ENCODE measurements at regions of chr5 and their contacts with region 1.

Region 1: GRCh38 chr5:168227001-168227400 is 64.4 kb upstream of the WWC1 start:
- DNase-seq: no peak
- H3K4me3 ChIP-seq: no peak overlapping the region
- H3K4me3 Mint-ChIP-seq: no peak overlapping the region
- H3K27ac Mint-ChIP-seq: no peak overlapping the region
- H3K4me1 ChIP-seq: no peaks in the 10 kb centered on the region; the same call in 1 of the 2 replicates
- H3K4me1 Mint-ChIP-seq: no peaks in the 10 kb centered on the region
- H3K27me3 ChIP-seq: no peaks in the 10 kb centered on the region
- H3K27me3 Mint-ChIP-seq: peaks cover 8% of the 10 kb centered on the region
- CTCF ChIP-seq: no peak

Region 2: GRCh38 chr5:167458406-167458805 is 768.6 kb before region 1 on chr5:
- CTCF ChIA-PET with region 1: interaction called, 10 read pairs
- POLR2A ChIA-PET with region 1: no interaction called
- intact Hi-C with region 1: no loop called
- DNase-seq: no peak
- H3K4me3 ChIP-seq: no peak overlapping the region
- H3K4me3 Mint-ChIP-seq: no peak overlapping the region
- H3K27ac Mint-ChIP-seq: no peak overlapping the region
- H3K4me1 ChIP-seq: no peaks in the 10 kb centered on the region
- H3K4me1 Mint-ChIP-seq: no peaks in the 10 kb centered on the region
- H3K27me3 ChIP-seq: no peaks in the 10 kb centered on the region
- H3K27me3 Mint-ChIP-seq: peaks cover 17% of the 10 kb centered on the region
- CTCF ChIP-seq: no peak

Region 3: GRCh38 chr5:168066536-168067208 is 160.3 kb before region 1 on chr5:
- CTCF ChIA-PET with region 1: no interaction called
- POLR2A ChIA-PET with region 1: no interaction called
- intact Hi-C with region 1: no loop called
- DNase-seq: no peak
- H3K4me3 ChIP-seq: no peak overlapping the region
- H3K4me3 Mint-ChIP-seq: no peak overlapping the region
- H3K27ac Mint-ChIP-seq: no peak overlapping the region
- H3K4me1 ChIP-seq: no peaks in the 10 kb centered on the region
- H3K4me1 Mint-ChIP-seq: no peaks in the 10 kb centered on the region
- H3K27me3 ChIP-seq: no peaks in the 10 kb centered on the region; the same call in 1 of the 2 replicates
- H3K27me3 Mint-ChIP-seq: peaks cover 19% of the 10 kb centered on the region
- CTCF ChIP-seq: no peak

Region 4: DNA sequence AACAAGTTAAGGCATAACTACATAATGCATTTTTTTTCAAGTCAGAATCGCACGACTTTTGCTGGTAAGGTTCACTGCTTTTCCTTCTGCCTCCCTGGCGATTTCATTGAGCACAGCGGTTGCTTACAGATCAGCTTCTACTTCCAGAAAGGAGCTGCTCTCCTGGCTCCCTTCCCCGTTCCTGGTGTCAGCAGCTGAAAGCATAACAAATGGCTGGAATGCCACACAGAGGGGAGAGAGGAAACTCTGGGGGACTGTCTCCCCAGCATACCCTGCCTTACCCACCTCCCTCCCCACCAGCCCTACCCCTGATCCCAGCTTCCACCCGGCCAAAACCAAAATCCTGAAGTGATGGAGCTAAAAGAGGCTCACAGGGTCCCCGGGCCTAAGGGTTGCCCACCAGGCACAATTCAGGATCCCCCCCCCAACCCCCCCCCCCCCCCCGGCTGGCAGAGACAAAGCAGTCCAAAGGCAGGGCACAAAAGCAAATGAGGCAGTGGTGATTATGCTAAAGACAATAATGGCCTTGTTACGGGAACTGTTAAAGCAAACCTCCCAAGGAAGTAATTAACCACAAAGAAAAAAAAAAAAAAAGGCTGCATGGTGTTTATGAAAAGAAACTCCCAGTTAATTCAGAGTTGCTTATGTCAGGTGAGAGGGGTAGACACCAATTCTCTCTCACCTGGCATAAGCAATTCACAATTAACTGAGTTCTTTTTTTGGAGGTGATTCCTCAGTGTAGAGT is 61.6 kb before region 1 on chr5:
- CTCF ChIA-PET with region 1: no interaction called
- POLR2A ChIA-PET with region 1: no interaction called
- intact Hi-C with region 1: no loop called
- DNase-seq: no peak
- H3K4me3 ChIP-seq: no peak overlapping the region
- H3K4me3 Mint-ChIP-seq: no peak overlapping the region
- H3K27ac Mint-ChIP-seq: no peak overlapping the region
- H3K4me1 ChIP-seq: no peaks in the 10 kb centered on the region
- H3K4me1 Mint-ChIP-seq: no peaks in the 10 kb centered on the region
- H3K27me3 ChIP-seq: no peaks in the 10 kb centered on the region; the same call in 1 of the 2 replicates
- H3K27me3 Mint-ChIP-seq: peaks cover 18% of the 10 kb centered on the region
- CTCF ChIP-seq: no peak

Measured in Caco-2 (cell line).